Naive thymus-derived CD4-positive, alpha-beta T cell (primary cell): ENCODE measurements at regions of chr13 and their contacts with region 1.

Region 1: GRCh38 chr13:27658546-27658945 is 36.9 kb downstream of the POLR1D start:
- DNase-seq: no peak
- ATAC-seq: no peak
- H3K4me3 ChIP-seq: no peak overlapping the region
- H3K4me3 Mint-ChIP-seq: no peak overlapping the region
- H3K27ac ChIP-seq: no peak overlapping the region
- H3K27ac Mint-ChIP-seq: no peak overlapping the region
- H3K4me1 ChIP-seq: no peaks in the 10 kb centered on the region
- H3K4me1 Mint-ChIP-seq: peaks cover 4 to 21% (median 12%) of the 10 kb centered on the region in 7 donors
- H3K27me3 ChIP-seq: no peaks in the 10 kb centered on the region
- H3K27me3 Mint-ChIP-seq: no peaks in the 10 kb centered on the region

Region 2: GRCh38 chr13:26855921-26856320 is 802.6 kb before region 1 on chr13:
- CTCF ChIA-PET with region 1: no interaction called
- POLR2A ChIA-PET with region 1: no interaction called
- intact Hi-C with region 1: no loop called
- DNase-seq: no peak
- ATAC-seq: no peak
- H3K4me3 ChIP-seq: no peak overlapping the region
- H3K4me3 Mint-ChIP-seq: no peak overlapping the region
- H3K27ac ChIP-seq: no peak overlapping the region
- H3K27ac Mint-ChIP-seq: no peak overlapping the region
- H3K4me1 ChIP-seq: no peaks in the 10 kb centered on the region
- H3K4me1 Mint-ChIP-seq: no peaks in the 10 kb centered on the region
- H3K27me3 ChIP-seq: no peaks in the 10 kb centered on the region
- H3K27me3 Mint-ChIP-seq: peaks cover 18 to 65% (median 35%) of the 10 kb centered on the region in 5 donors

Region 3: DNA sequence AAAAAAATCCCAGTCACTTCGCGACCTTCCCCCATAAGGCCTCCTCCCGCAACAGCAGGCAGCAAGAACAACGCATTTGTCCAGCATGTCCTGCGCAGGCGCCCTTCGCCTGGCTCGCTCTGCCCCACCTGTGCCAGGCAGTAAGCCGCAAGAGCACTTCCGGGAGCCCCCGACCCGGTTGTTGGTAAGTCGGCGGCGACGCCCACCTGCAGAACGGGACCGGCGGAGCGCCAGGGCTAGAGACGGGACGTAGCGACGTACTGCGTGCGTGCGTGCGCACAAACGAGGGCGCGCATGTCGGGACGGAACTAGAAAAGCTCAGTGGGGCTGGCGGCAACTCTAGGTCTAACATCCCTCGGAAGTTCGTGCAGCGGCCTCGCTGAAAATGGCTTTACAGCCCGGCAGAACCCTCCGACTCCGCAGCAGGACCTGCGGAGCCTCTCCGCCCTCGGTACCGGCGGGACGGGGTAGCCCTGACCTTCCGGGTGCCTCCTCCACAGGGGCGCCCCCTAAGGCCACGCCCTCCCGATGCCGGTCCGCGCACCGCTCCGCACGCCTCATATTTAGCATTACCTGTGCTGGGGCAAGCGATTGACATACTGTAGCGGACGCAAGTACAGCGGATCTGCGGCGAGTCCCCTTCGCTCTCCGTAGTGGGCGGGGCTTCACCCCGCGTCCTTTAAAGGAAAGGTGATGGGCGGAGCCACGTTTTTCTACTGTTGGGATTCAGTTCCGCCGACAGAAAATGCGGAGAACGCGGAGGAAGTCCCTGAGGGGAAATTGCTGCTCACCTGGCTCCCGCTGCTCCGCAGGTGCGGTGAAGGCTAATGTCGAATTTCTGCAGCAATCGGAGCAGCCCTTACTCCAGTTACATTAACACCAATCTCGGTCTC is 208.4 kb before region 1 on chr13 and contains the start of gene MTIF3:
- CTCF ChIA-PET with region 1: no interaction called
- POLR2A ChIA-PET with region 1: no interaction called
- intact Hi-C with region 1: no loop called
- DNase-seq: peak; percentile 90 to 99 (median 98)
- ATAC-seq: peak; percentile 89
- H3K4me3 ChIP-seq: peak within 1 kb of the TSS; percentile 82
- H3K4me3 Mint-ChIP-seq: peak within 1 kb of the TSS; percentile 89 to 96 (median 94)
- H3K27ac ChIP-seq: peak within 1 kb of the TSS; percentile 96
- H3K27ac Mint-ChIP-seq: peak within 1 kb of the TSS; percentile 94 to 100 (median 98)
- H3K4me1 ChIP-seq: peaks cover 35 to 41% of the 10 kb centered on the region in 2 donors
- H3K4me1 Mint-ChIP-seq: peaks cover 45 to 75% (median 56%) of the 10 kb centered on the region in 7 donors
- H3K27me3 ChIP-seq: no peaks in the 10 kb centered on the region
- H3K27me3 Mint-ChIP-seq: no peaks in the 10 kb centered on the region
- total RNA-seq, gene MTIF3: 28.4 to 89.6 (median 51.3) TPM

Region 4: GRCh38 chr13:27638521-27638920 is 20.0 kb before region 1 on chr13:
- CTCF ChIA-PET with region 1: no interaction called
- POLR2A ChIA-PET with region 1: no interaction called
- intact Hi-C with region 1: no loop called
- DNase-seq: no peak
- ATAC-seq: no peak
- H3K4me3 ChIP-seq: no peak overlapping the region
- H3K4me3 Mint-ChIP-seq: peak overlapping the region in 1 of 10 donors; percentile 12
- H3K27ac ChIP-seq: no peak overlapping the region
- H3K27ac Mint-ChIP-seq: peak overlapping the region in 2 of 9 donors; percentile 29 to 38
- H3K4me1 ChIP-seq: peaks cover 0 to 6% of the 10 kb centered on the region in 2 donors
- H3K4me1 Mint-ChIP-seq: peaks cover 25 to 81% (median 66%) of the 10 kb centered on the region in 7 donors
- H3K27me3 ChIP-seq: no peaks in the 10 kb centered on the region
- H3K27me3 Mint-ChIP-seq: no peaks in the 10 kb centered on the region

Region 5: DNA sequence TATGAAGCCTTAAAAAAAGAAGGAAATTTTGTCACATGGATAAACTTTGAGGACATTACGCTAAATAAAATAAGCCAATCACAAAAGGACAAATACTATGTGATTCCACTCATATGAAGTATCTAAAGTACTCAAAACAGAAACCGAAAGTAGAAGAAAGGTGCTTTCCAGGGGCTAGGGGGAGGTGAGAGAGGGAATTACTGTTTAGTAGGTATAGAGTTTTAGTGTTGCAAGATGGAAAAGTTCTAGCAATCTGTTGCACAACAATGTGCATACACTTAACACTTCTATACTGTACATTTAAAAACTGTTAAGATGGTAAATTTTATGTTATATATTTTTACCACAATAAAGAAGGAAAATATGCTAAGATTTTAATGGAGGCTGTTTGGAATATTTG is 46.1 kb after region 1 on chr13:
- CTCF ChIA-PET with region 1: no interaction called
- POLR2A ChIA-PET with region 1: no interaction called
- intact Hi-C with region 1: loop called in 1 of 2 experiments (anchors 2 kb)
- DNase-seq: no peak
- ATAC-seq: no peak
- H3K4me3 ChIP-seq: no peak overlapping the region
- H3K4me3 Mint-ChIP-seq: peak overlapping the region in 2 of 10 donors; percentile 26 to 43
- H3K27ac ChIP-seq: no peak overlapping the region
- H3K27ac Mint-ChIP-seq: no peak overlapping the region
- H3K4me1 ChIP-seq: peaks cover 0 to 3% of the 10 kb centered on the region in 2 donors
- H3K4me1 Mint-ChIP-seq: peaks cover 0 to 13% (median 5%) of the 10 kb centered on the region in 7 donors
- H3K27me3 ChIP-seq: no peaks in the 10 kb centered on the region
- H3K27me3 Mint-ChIP-seq: peaks cover 18 to 45% (median 23%) of the 10 kb centered on the region in 5 donors